Gastrocnemius medialis (tissue), 4 donors: ENCODE measurements at regions of chr4 and their contacts with region 1.

Region 1: DNA sequence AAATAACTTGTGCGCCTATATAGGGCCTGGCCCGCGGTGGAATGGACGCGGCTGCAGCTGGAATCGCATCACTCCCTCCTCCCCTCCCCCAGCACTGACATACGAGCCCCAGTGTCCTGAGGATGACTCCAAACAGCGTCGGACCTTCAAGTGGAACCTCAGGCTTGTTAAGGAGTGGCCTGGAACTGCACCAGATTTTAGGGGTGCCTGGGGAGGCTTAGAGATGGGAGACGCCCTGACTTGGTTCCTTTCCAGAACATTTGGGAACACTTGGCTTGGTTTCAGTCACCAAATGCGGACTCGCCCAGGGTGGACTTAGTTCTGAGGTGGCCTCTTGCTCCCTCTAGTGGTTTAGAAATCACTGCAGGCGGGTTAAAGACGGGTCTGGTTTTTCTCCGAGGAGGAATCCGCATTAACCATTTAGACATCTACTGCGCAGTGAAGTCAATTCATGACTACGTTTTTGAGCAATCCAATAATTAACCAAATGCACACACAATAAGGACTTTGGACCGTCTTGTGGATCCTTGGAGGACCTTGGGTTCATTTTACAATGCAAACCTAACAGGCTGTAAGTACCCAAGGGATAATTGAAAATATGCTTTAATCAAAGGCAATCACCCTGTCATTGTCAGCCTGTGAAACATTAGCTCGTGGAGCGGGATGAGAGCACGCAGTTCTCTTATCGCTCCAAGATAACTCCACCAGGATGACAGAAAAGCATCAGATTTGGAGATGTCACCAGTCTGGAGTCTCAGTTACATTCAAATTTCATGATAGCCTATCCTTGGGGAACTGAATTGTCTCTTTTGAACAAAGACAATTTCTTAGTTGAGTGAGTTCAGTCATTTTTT is 11.2 kb upstream of the PDGFRA start:
- DNase-seq: peak; percentile 62 to 85
- ATAC-seq: peak; percentile 88 to 94
- H3K4me3 ChIP-seq: peak overlapping the region; percentile 39 to 51 (median 45)
- H3K27ac ChIP-seq: peak overlapping the region in 1 of 4 donors; percentile 29
- H3K4me1 ChIP-seq: peaks cover 3% of the 10 kb centered on the region in 2 donors
- H3K27me3 ChIP-seq: peaks cover 0 to 4% (median 0%) of the 10 kb centered on the region in 3 donors
- CTCF ChIP-seq: peak; percentile 83 to 95 (median 89)
- POLR2A ChIP-seq: no peak

Region 2: DNA sequence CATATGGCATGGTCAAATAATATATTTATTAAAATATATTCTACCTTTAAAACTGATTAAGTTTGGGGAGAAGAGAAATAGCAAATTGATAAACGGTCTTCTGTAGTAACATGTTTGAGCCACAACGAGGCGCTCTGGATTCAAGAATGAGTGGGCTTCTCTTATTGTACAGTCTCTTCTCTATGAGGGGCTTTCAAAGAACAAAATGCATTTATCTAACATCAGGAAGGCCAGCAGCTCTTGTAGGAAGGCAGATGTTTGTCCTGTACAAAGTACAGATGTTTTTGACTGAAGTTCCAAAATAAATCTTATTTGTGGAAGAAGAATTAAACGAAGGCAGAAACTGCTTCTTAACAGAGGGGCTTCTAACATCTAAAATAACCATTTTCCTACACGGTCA is 1202.2 kb before region 1 on chr4:
- in situ Hi-C with region 1: loop called in 2 of 4 experiments (anchors 10 to 25 kb)
- intact Hi-C with region 1: no loop called
- DNase-seq: no peak
- ATAC-seq: no peak
- H3K4me3 ChIP-seq: no peak overlapping the region
- H3K27ac ChIP-seq: peak overlapping the region in 2 of 4 donors; percentile 6 to 28
- H3K4me1 ChIP-seq: peaks cover 18 to 45% of the 10 kb centered on the region in 2 donors
- H3K27me3 ChIP-seq: no peaks in the 10 kb centered on the region
- CTCF ChIP-seq: peak in 4 of 5 experiments; percentile 47 to 66 (median 59)
- POLR2A ChIP-seq: no peak

Region 3: GRCh38 chr4:53490965-53491622 is 726.8 kb before region 1 on chr4:
- in situ Hi-C with region 1: loop called in 3 of 4 experiments (anchors 10 to 25 kb)
- intact Hi-C with region 1: no loop called
- DNase-seq: peak in 1 of 2 donors; percentile 48
- ATAC-seq: peak; percentile 68 to 81
- H3K4me3 ChIP-seq: no peak overlapping the region
- H3K27ac ChIP-seq: peak overlapping the region in 1 of 4 donors; percentile 3
- H3K4me1 ChIP-seq: peaks cover 5 to 11% of the 10 kb centered on the region in 2 donors
- H3K27me3 ChIP-seq: no peaks in the 10 kb centered on the region
- CTCF ChIP-seq: peak; percentile 30 to 62 (median 50)
- POLR2A ChIP-seq: no peak

Region 4: DNA sequence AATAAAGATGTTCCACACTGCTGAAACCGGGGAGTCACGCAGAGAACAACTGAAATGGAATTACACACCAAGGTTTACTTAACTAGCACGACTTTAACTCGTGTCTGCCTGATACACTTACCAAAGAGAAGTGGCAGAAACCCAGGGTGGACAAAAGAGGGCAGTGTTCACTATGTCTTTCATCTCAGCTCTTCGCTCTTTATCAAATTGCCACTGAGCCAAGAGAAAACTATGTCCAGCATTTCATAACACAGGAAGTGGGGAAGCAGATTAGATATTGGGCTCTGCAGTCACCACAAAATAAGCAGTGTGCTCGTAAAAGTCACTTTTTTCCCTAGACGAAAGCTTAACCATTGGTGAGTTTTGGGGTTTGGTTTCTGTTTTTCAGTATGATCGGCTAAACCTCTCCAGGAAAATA is 309.2 kb before region 1 on chr4:
- in situ Hi-C with region 1: no loop called
- intact Hi-C with region 1: loop called (anchors 1 kb)
- DNase-seq: peak; percentile 10 to 25
- ATAC-seq: peak; percentile 86 to 96
- H3K4me3 ChIP-seq: peak overlapping the region in 1 of 4 donors; percentile 22
- H3K27ac ChIP-seq: peak overlapping the region in 1 of 4 donors; percentile 14
- H3K4me1 ChIP-seq: peaks cover 16% of the 10 kb centered on the region in 2 donors
- H3K27me3 ChIP-seq: no peaks in the 10 kb centered on the region
- CTCF ChIP-seq: peak; percentile 20 to 64 (median 53)
- POLR2A ChIP-seq: no peak

Region 5: GRCh38 chr4:54064295-54065111 is 153.4 kb before region 1 on chr4 and contains the start of gene CHIC2:
- in situ Hi-C with region 1: no loop called
- intact Hi-C with region 1: loop called (anchors 10 kb)
- DNase-seq: peak; percentile 90 to 92
- ATAC-seq: peak; percentile 90 to 91
- H3K4me3 ChIP-seq: peak within 1 kb of the TSS; percentile 89 to 98 (median 94)
- H3K27ac ChIP-seq: peak within 1 kb of the TSS; percentile 83 to 94 (median 89)
- H3K4me1 ChIP-seq: peaks cover 45 to 46% of the 10 kb centered on the region in 2 donors
- H3K27me3 ChIP-seq: no peaks in the 10 kb centered on the region
- CTCF ChIP-seq: peak in 1 of 5 experiments; percentile 8
- POLR2A ChIP-seq: peak; percentile 93 to 98
- total RNA-seq, gene CHIC2: 11.9 to 18.6 (median 15.5) TPM

Region 6: DNA sequence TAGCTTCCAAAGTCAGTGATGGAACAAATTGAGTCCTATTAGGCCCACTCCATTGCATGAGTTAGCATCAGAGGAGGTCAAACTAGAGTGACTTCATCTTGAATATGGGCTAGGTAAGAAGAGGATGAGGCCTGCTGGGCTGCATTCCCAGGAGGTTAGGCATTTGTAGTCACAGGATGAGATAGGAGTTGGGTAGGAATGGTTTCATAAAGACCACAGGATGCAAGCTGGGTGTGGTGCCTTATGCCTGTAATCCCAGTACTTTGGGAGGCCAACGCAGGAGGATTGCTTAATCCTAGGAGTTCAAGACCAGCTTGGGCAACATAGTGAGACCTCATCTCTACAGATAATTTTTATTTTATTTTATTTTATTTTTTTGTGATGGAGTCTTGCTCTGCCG is 38.0 kb after region 1 on chr4:
- in situ Hi-C with region 1: no loop called
- intact Hi-C with region 1: no loop called
- DNase-seq: peak in 1 of 2 donors; percentile 53
- ATAC-seq: no peak
- H3K4me3 ChIP-seq: no peak overlapping the region
- H3K27ac ChIP-seq: no peak overlapping the region
- H3K4me1 ChIP-seq: no peaks in the 10 kb centered on the region
- H3K27me3 ChIP-seq: no peaks in the 10 kb centered on the region
- CTCF ChIP-seq: no peak
- POLR2A ChIP-seq: no peak